Caco-2 (cell line): ENCODE measurements at regions of chr6 and their contacts with region 1.

Region 1: DNA sequence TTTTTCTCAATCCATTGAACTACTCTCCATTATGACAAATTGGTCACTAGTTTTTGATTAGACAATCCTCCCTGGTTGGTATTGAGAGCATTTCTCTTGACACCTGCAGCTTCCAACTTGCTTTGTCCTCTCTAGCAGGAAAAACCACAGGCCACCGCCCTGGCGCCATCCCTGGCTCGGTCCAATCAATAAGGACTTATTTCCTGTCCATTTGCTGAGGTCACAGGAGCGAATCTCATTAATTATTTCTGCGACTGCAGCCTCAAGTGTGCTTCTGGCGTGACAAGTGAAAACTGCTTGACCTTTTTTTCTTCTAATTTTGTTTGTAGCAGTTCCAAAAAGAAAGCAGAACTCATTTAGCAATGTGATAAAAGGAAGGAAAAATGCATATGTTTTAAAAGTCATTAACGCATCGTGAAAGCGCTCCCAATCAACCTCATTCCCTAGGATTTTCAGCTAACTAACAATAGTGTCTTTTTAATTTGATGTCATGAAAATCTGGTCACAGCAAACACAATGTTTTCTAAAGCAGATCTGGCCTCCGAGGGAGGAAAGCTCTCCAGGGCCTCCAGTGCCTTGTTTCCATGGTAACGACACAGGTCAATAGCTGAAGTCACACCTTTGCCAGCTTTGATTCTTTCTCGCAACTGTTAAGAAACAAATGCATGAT is 39.0 kb upstream of the BEND3 start:
- DNase-seq: peak in 1 of 2 experiments; percentile 37
- H3K4me3 ChIP-seq: no peak overlapping the region
- H3K4me3 Mint-ChIP-seq: no peak overlapping the region
- H3K27ac Mint-ChIP-seq: peak overlapping the region; percentile 40
- H3K4me1 ChIP-seq: peaks cover 33% of the 10 kb centered on the region
- H3K4me1 Mint-ChIP-seq: peaks cover 38% of the 10 kb centered on the region
- H3K27me3 ChIP-seq: no peaks in the 10 kb centered on the region
- H3K27me3 Mint-ChIP-seq: no peaks in the 10 kb centered on the region
- CTCF ChIP-seq: no peak

Region 2: DNA sequence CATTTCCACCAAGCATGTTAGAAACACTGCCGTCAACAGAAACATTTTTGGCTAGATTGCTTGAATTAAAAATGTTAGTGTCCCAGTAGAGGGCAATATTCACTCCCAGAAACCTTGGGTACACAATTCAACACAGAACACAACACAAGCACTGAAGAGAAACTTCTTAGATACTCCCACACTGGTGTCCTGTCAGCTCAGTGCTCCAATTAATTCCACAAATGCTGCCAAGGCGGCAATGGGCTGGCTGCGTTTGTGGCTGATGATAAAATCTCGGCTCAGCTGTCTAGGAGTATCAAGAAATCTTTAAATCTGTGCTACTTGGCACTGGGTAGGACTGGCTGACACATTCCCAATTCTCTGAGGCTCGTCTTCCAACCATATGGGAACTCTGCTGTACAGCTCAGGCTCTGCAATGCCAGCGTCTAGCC is 78.3 kb before region 1 on chr6:
- CTCF ChIA-PET with region 1: no interaction called
- POLR2A ChIA-PET with region 1: no interaction called
- intact Hi-C with region 1: no loop called
- DNase-seq: no peak
- H3K4me3 ChIP-seq: no peak overlapping the region
- H3K4me3 Mint-ChIP-seq: no peak overlapping the region
- H3K27ac Mint-ChIP-seq: no peak overlapping the region
- H3K4me1 ChIP-seq: no peaks in the 10 kb centered on the region
- H3K4me1 Mint-ChIP-seq: no peaks in the 10 kb centered on the region
- H3K27me3 ChIP-seq: no peaks in the 10 kb centered on the region
- H3K27me3 Mint-ChIP-seq: no peaks in the 10 kb centered on the region
- CTCF ChIP-seq: no peak

Region 3: DNA sequence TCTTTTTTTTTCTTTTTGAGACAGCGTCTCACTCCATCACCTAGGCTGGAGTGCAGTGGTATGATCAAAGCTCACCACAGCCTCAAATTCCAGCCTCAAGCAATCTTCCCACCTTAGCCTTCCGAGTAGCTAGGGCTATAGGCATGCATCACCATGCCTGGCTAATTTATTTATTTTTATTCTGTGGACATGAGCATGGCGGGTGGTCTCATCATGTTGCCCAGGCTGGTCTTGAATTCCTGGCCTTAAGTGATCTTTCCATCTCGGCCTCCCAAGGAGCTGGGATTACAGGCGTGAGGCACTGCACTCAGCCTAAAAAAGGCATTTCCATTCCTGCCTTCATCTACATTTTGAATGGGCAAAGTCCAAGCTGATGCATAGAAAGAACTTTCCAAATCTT is 17.2 kb after region 1 on chr6:
- CTCF ChIA-PET with region 1: no interaction called
- POLR2A ChIA-PET with region 1: no interaction called
- intact Hi-C with region 1: no loop called
- DNase-seq: no peak
- H3K4me3 ChIP-seq: no peak overlapping the region
- H3K4me3 Mint-ChIP-seq: no peak overlapping the region
- H3K27ac Mint-ChIP-seq: no peak overlapping the region
- H3K4me1 ChIP-seq: no peaks in the 10 kb centered on the region
- H3K4me1 Mint-ChIP-seq: no peaks in the 10 kb centered on the region
- H3K27me3 ChIP-seq: no peaks in the 10 kb centered on the region
- H3K27me3 Mint-ChIP-seq: no peaks in the 10 kb centered on the region
- CTCF ChIP-seq: no peak

Region 4: GRCh38 chr6:107218142-107218541 is 63.9 kb after region 1 on chr6:
- CTCF ChIA-PET with region 1: no interaction called
- POLR2A ChIA-PET with region 1: no interaction called
- intact Hi-C with region 1: no loop called
- DNase-seq: no peak
- H3K4me3 ChIP-seq: no peak overlapping the region
- H3K4me3 Mint-ChIP-seq: no peak overlapping the region
- H3K27ac Mint-ChIP-seq: no peak overlapping the region
- H3K4me1 ChIP-seq: peaks cover 6% of the 10 kb centered on the region; the same call in 1 of the 2 replicates
- H3K4me1 Mint-ChIP-seq: peaks cover 8% of the 10 kb centered on the region
- H3K27me3 ChIP-seq: no peaks in the 10 kb centered on the region
- H3K27me3 Mint-ChIP-seq: no peaks in the 10 kb centered on the region
- CTCF ChIP-seq: no peak

Region 5: GRCh38 chr6:107657755-107658461 is 503.6 kb after region 1 on chr6:
- CTCF ChIA-PET with region 1: no interaction called
- POLR2A ChIA-PET with region 1: no interaction called
- intact Hi-C with region 1: loop called (anchors 10 kb)
- DNase-seq: no peak
- H3K4me3 ChIP-seq: no peak overlapping the region
- H3K4me3 Mint-ChIP-seq: no peak overlapping the region
- H3K27ac Mint-ChIP-seq: no peak overlapping the region
- H3K4me1 ChIP-seq: no peaks in the 10 kb centered on the region
- H3K4me1 Mint-ChIP-seq: peaks cover 7% of the 10 kb centered on the region
- H3K27me3 ChIP-seq: no peaks in the 10 kb centered on the region
- H3K27me3 Mint-ChIP-seq: peaks cover 6% of the 10 kb centered on the region
- CTCF ChIP-seq: no peak